ENCODE measurements at regions of chr2 and their contacts with region 1.

Region 1: GRCh38 chr2:144529841-144530240 is 9.9 kb upstream of the ZEB2 start:
- DNase-seq: no peak
- H3K4me3 ChIP-seq: no peak overlapping the region
- H3K4me3 Mint-ChIP-seq: no peak overlapping the region
- H3K27ac ChIP-seq: no peak overlapping the region
- H3K27ac Mint-ChIP-seq: peak overlapping the region in 1 of 7 donors; percentile 61
- H3K4me1 ChIP-seq: peaks cover 5 to 23% of the 10 kb centered on the region in 2 donors
- H3K4me1 Mint-ChIP-seq: peaks cover 21% of the 10 kb centered on the region
- H3K27me3 ChIP-seq: no peaks in the 10 kb centered on the region
- H3K27me3 Mint-ChIP-seq: no peaks in the 10 kb centered on the region
- CTCF ChIP-seq: no peak

Region 2: GRCh38 chr2:144215701-144216675 is 313.9 kb before region 1 on chr2:
- intact Hi-C with region 1: no loop called
- DNase-seq: no peak
- H3K4me3 ChIP-seq: no peak overlapping the region
- H3K4me3 Mint-ChIP-seq: no peak overlapping the region
- H3K27ac ChIP-seq: no peak overlapping the region
- H3K27ac Mint-ChIP-seq: no peak overlapping the region
- H3K4me1 ChIP-seq: no peaks in the 10 kb centered on the region
- H3K4me1 Mint-ChIP-seq: peaks cover 4% of the 10 kb centered on the region
- H3K27me3 ChIP-seq: no peaks in the 10 kb centered on the region
- H3K27me3 Mint-ChIP-seq: no peaks in the 10 kb centered on the region
- CTCF ChIP-seq: no peak

Region 3: DNA sequence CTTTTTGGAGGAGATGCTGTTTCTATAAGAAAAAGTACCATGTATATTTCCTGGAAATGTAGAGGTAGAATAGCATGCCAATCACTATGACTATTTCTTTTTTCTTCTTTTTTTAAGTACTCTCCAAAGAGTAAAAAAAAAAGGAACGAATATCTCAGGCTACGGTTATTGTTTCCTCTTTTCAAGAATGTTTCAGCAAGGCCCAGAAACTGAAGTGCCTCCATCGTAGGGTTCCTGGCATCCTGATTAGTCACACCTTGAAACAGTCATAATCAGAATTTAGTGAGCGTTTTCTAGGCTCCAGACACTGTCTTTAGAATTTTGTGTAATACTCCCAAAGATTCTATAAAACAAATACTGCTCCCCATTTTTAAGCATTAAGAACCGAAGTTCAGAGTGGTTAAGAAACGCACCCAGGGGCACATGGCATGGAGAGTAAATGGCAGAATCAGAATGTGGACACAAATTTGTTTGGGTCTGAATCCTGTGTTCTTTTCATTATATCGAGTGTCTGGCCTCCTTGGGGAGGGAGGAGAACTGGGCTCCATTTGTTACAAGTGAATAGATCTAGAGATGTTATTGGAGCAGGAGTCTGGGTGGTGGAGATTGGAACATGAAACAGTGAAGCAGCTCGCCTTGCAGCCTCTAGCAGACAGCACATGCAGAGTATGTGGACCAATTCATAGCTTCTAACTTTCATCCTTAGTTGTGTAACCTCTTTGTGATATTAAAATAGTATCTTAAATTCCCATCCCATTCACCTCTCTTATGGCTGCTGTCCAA is 36.6 kb before region 1 on chr2:
- intact Hi-C with region 1: no loop called
- DNase-seq: peak; percentile 76 to 90 (median 88)
- H3K4me3 ChIP-seq: peak overlapping the region in 1 of 3 experiments; percentile 14
- H3K4me3 Mint-ChIP-seq: no peak overlapping the region
- H3K27ac ChIP-seq: peak overlapping the region; percentile 36 to 84
- H3K27ac Mint-ChIP-seq: peak overlapping the region; percentile 73 to 96 (median 87)
- H3K4me1 ChIP-seq: peaks cover 71 to 80% of the 10 kb centered on the region in 2 donors
- H3K4me1 Mint-ChIP-seq: peaks cover 73% of the 10 kb centered on the region
- H3K27me3 ChIP-seq: no peaks in the 10 kb centered on the region
- H3K27me3 Mint-ChIP-seq: no peaks in the 10 kb centered on the region
- CTCF ChIP-seq: no peak

Region 4: GRCh38 chr2:144583741-144584453 is 54.1 kb after region 1 on chr2:
- intact Hi-C with region 1: loop called in 1 of 2 experiments (anchors 5 kb)
- DNase-seq: peak in 1 of 3 donors; percentile 46
- H3K4me3 ChIP-seq: peak overlapping the region in 1 of 3 experiments; percentile 45
- H3K4me3 Mint-ChIP-seq: no peak overlapping the region
- H3K27ac ChIP-seq: no peak overlapping the region
- H3K27ac Mint-ChIP-seq: peak overlapping the region in 3 of 7 donors; percentile 4 to 74 (median 8)
- H3K4me1 ChIP-seq: peaks cover 38 to 45% of the 10 kb centered on the region in 2 donors
- H3K4me1 Mint-ChIP-seq: peaks cover 45% of the 10 kb centered on the region
- H3K27me3 ChIP-seq: no peaks in the 10 kb centered on the region
- H3K27me3 Mint-ChIP-seq: peaks cover 1 to 5% (median 5%) of the 10 kb centered on the region in 3 donors
- CTCF ChIP-seq: no peak